ENCODE measurements at regions of chr1 and their contacts with region 1.

Region 1: DNA sequence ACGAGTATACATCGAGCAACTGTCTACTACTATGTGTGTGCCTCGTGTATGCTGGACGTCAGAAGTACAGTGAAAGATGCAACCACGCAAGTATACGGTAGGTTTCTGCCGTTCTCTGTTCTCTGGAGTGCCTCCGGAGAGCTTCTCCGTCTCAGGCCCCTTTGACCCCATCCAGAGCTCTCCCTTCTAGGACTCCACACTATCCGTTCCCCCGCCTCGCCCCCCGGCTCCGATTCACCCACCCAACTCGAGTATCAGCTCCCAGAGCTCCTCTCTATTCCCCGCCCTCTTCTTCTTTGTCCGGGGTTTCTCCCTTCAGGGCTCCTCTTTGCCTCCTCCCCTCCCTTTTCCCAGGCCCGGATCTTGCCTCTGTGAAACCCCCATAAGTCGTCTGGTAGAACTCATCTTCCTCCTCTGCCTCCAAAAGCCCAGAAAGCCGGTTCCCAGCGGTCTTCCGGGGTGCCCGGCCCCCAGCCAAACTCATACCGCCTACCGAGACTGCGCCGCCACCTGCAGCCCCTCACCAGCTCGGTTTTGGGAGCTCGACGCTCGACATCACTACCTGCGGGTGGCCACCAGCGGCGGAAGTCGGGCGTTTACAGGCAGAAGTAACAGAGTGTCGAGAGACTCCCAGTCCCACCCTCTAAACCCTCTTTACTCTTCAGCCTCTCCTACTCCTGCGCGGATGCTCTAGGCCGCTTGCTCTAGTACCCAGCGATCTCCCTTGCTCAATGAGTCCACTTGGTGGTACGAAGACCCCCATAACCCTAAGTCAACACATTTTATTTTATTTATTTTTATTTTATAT is at the start of gene VPS72:
- DNase-seq: peak; percentile 58 to 94 (median 85)
- ATAC-seq: peak; percentile 91
- H3K4me3 ChIP-seq: peak within 1 kb of the TSS; percentile 78 to 89
- H3K4me3 Mint-ChIP-seq: peak within 1 kb of the TSS; percentile 100
- H3K27ac ChIP-seq: peak within 1 kb of the TSS; percentile 69 to 81
- H3K27ac Mint-ChIP-seq: peak within 1 kb of the TSS; percentile 99
- H3K4me1 ChIP-seq: peaks cover 18% of the 10 kb centered on the region
- H3K4me1 Mint-ChIP-seq: peaks cover 37% of the 10 kb centered on the region
- H3K27me3 ChIP-seq: no peaks in the 10 kb centered on the region
- H3K27me3 Mint-ChIP-seq: no peaks in the 10 kb centered on the region
- CTCF ChIP-seq: no peak
- total RNA-seq, gene VPS72: 7.0 to 12.1 TPM

Region 2: GRCh38 chr1:151165738-151166505 is 23.9 kb before region 1 on chr1 and contains the starts of genes LYSMD1 and SCNM1:
- CTCF ChIA-PET with region 1: interaction called, 4 read pairs
- POLR2A ChIA-PET with region 1: interaction called, 13 read pairs
- intact Hi-C with region 1: loop called (anchors 1 kb)
- DNase-seq: peak; percentile 91 to 99 (median 95)
- ATAC-seq: peak; percentile 96
- H3K4me3 ChIP-seq: peak within 1 kb of the TSS; percentile 82 to 94
- H3K4me3 Mint-ChIP-seq: peak within 1 kb of the TSS; percentile 95
- H3K27ac ChIP-seq: peak within 1 kb of the TSS; percentile 72 to 77
- H3K27ac Mint-ChIP-seq: peak within 1 kb of the TSS; percentile 94
- H3K4me1 ChIP-seq: peaks cover 29% of the 10 kb centered on the region
- H3K4me1 Mint-ChIP-seq: peaks cover 50% of the 10 kb centered on the region
- H3K27me3 ChIP-seq: no peaks in the 10 kb centered on the region
- H3K27me3 Mint-ChIP-seq: no peaks in the 10 kb centered on the region
- CTCF ChIP-seq: no peak
- total RNA-seq, gene LYSMD1: 0.49 to 0.94 TPM
- total RNA-seq, gene SCNM1: 35.0 to 40.4 TPM